ENCODE measurements at regions of chr3 and their contacts with region 1.

Region 1: GRCh38 chr3:187319699-187320302 is 28.3 kb upstream of the MASP1 start:
- DNase-seq: peak; percentile 69
- H3K4me3 Mint-ChIP-seq: no peak overlapping the region
- H3K27ac Mint-ChIP-seq: no peak overlapping the region
- H3K4me1 Mint-ChIP-seq: peaks cover 11% of the 10 kb centered on the region
- H3K27me3 Mint-ChIP-seq: peaks cover 37% of the 10 kb centered on the region

Region 2: DNA sequence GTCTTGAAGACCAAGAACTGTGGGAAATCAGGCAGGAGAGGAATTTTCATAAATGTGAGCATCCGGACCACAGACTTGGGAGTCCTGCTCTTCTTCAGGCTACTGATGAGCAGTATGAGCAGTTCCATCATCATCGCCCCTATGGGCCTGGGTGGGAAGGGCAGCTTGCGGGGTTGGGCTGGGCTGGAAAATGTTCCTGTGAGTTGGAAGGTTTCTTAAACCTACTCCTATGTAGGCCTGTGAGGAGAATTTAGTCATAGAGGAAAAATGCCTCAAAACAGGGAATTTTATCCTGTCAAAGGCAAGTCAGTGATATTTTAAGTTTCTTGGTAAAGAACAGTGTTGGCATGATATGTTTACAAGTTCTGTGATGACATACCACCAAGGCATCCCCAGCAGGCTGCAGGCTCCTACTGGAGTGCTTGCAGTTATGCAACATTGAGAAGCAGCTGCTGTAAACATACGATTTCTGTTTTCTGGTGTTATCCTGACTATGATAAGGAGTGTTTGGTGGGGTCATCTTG is 38.5 kb before region 1 on chr3:
- CTCF ChIA-PET with region 1: no interaction called
- POLR2A ChIA-PET with region 1: no interaction called
- DNase-seq: no peak
- H3K4me3 Mint-ChIP-seq: no peak overlapping the region
- H3K27ac Mint-ChIP-seq: no peak overlapping the region
- H3K4me1 Mint-ChIP-seq: no peaks in the 10 kb centered on the region
- H3K27me3 Mint-ChIP-seq: peaks cover 20% of the 10 kb centered on the region

Region 3: GRCh38 chr3:187368251-187369088 is 48.7 kb after region 1 on chr3 and contains the start of gene RTP4:
- CTCF ChIA-PET with region 1: interaction called, 37 read pairs
- POLR2A ChIA-PET with region 1: interaction called, 7 read pairs
- DNase-seq: peak; percentile 47
- H3K4me3 Mint-ChIP-seq: peak within 1 kb of the TSS; percentile 88
- H3K27ac Mint-ChIP-seq: peak within 1 kb of the TSS; percentile 92
- H3K4me1 Mint-ChIP-seq: peaks cover 29% of the 10 kb centered on the region
- H3K27me3 Mint-ChIP-seq: no peaks in the 10 kb centered on the region
- total RNA-seq, gene RTP4: 23.2 to 24.1 TPM

Region 4: DNA sequence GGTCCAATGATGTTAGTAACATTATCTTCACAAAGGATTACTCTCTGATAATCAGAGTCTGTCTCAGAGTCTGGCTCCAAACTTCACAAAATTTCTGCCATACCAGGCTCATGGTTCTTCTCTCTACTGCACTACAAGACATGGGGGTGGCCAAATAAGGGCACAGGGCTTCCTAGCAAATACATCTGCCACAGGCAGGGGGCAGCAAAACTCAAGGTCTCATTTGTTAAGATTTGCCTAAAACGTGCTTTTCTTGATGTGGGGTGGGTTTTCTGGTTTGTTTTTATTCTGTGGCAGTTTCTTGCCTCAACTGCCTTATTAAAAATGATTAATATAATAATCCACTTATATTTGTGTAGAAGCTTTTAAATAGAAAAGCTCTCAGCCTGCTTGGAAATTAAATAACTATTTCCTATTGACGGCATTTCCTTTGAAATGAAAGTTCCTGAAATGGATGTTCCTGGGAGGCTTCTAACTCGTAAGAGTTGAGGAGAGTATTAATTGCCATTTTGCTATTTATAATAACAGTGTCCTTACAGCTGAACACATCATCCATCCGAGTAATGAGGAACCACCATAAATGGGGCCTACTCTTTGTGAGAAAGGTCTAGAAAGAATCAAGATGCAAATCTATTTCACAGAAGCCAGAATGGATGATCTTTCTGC is 296.6 kb after region 1 on chr3:
- CTCF ChIA-PET with region 1: interaction called, 17 read pairs
- POLR2A ChIA-PET with region 1: no interaction called
- DNase-seq: peak; percentile 57
- H3K4me3 Mint-ChIP-seq: no peak overlapping the region
- H3K27ac Mint-ChIP-seq: no peak overlapping the region
- H3K4me1 Mint-ChIP-seq: no peaks in the 10 kb centered on the region
- H3K27me3 Mint-ChIP-seq: peaks cover 20% of the 10 kb centered on the region

Region 5: DNA sequence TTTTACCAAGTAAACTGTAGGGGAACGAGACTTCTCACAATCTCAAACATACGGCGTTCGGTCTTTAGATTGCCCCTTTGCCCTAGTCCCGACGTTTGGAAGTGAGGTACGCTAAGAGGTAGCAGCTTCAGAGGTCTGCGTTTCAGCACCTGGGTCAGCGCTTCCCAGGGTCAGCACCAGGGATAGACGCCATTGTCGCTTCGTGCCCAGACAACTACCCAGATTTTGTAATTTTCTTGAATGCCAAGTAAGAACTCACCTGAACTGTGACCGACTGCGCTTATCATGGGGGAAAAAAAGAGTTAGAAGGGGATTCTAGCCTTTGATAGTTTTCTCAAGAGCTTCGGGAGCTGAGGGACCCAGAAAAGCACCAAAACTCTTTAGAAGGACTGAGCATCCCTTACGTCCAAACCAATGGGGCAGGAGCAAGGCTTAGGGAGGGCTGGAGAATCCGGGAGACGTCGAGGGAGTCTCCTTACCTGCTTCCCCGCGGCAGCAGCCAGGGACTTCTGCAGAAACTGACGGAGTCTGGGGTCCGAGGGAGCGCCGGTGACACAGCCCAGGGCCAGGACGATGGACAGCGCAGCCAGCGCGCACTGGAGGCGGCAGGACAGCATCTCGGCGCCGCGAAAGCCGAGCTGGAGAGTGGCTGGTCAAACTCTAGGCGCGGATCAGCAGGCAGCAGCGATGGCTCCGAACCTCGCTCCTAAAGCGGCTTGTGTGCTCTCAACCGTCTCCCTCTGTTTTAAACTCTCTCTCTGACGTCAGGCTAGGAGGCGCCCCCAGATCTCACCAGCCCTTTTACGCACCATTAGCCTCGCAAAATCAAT is 350.1 kb after region 1 on chr3 and contains the start of gene SST:
- CTCF ChIA-PET with region 1: interaction called, 313 read pairs
- POLR2A ChIA-PET with region 1: no interaction called
- DNase-seq: peak; percentile 25
- H3K4me3 Mint-ChIP-seq: no peak within 1 kb of the TSS
- H3K27ac Mint-ChIP-seq: no peak within 1 kb of the TSS
- H3K4me1 Mint-ChIP-seq: no peaks in the 10 kb centered on the region
- H3K27me3 Mint-ChIP-seq: peaks cover 66% of the 10 kb centered on the region
- total RNA-seq, gene SST: not detected

Region 6: GRCh38 chr3:187684880-187685279 is 365.1 kb after region 1 on chr3:
- CTCF ChIA-PET with region 1: interaction called, 313 read pairs
- POLR2A ChIA-PET with region 1: interaction called, 9 read pairs
- DNase-seq: no peak
- H3K4me3 Mint-ChIP-seq: no peak overlapping the region
- H3K27ac Mint-ChIP-seq: no peak overlapping the region
- H3K4me1 Mint-ChIP-seq: peaks cover 3% of the 10 kb centered on the region
- H3K27me3 Mint-ChIP-seq: peaks cover 58% of the 10 kb centered on the region

Measured in activated CD4-positive, alpha-beta memory T cell treated with anti-CD3 and anti-CD28 coated beads, Interleukin-2, amount 10 ng/mL, durations not matched to agents 7 days and 5 days (primary cell).